Activated CD4-positive, alpha-beta T cell treated with anti-CD3 and anti-CD28 coated beads for 36 hours (primary cell): ENCODE measurements at regions of chrX and their contacts with region 1.

Region 1: GRCh38 chrX:136572030-136572429 is 40.0 kb downstream of the VGLL1 start:
- DNase-seq: no peak
- ATAC-seq: peak; percentile 39
- H3K4me3 Mint-ChIP-seq: no peak overlapping the region
- H3K27ac Mint-ChIP-seq: no peak overlapping the region
- H3K4me1 Mint-ChIP-seq: peaks cover 20% of the 10 kb centered on the region
- H3K27me3 Mint-ChIP-seq: no peaks in the 10 kb centered on the region

Region 2: GRCh38 chrX:136598631-136599030 is 26.6 kb after region 1 on chrX:
- CTCF ChIA-PET with region 1: interaction called, 5 read pairs
- POLR2A ChIA-PET with region 1: interaction called, 11 read pairs
- intact Hi-C with region 1: no loop called
- DNase-seq: peak; percentile 58
- ATAC-seq: peak; percentile 86
- H3K4me3 Mint-ChIP-seq: peak overlapping the region; percentile 35
- H3K27ac Mint-ChIP-seq: peak overlapping the region; percentile 88
- H3K4me1 Mint-ChIP-seq: peaks cover 52% of the 10 kb centered on the region
- H3K27me3 Mint-ChIP-seq: no peaks in the 10 kb centered on the region

Region 3: DNA sequence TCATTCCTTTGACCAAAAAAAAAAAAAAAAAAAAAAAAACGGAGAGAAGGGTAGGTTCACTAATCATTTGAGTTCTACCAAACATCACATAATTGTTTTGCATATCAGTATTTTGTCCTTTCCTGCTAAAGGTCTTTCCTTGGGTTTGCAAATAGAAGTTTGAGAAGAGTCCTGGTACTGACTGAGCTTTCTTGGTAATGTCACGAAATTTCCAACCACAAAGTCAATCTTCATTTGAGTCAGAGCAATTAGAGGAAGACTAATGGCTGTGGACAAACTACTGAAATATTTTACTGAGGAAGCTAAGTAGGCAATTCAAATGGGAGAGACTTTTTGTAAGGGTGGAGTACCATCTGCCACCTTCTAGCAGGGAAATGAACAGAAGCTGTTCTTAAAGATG is 54.2 kb after region 1 on chrX:
- CTCF ChIA-PET with region 1: no interaction called
- POLR2A ChIA-PET with region 1: no interaction called
- intact Hi-C with region 1: no loop called
- DNase-seq: no peak
- ATAC-seq: peak; percentile 20
- H3K4me3 Mint-ChIP-seq: no peak overlapping the region
- H3K27ac Mint-ChIP-seq: peak overlapping the region; percentile 93
- H3K4me1 Mint-ChIP-seq: peaks cover 92% of the 10 kb centered on the region
- H3K27me3 Mint-ChIP-seq: no peaks in the 10 kb centered on the region